PC-3 (cell line): ENCODE measurements at regions of chr7 and their contacts with region 1.

Region 1: GRCh38 chr7:74519395-74519794 is 65.7 kb downstream of the GTF2IRD1 start:
- DNase-seq: no peak
- ATAC-seq: no peak
- H3K4me3 ChIP-seq: no peak overlapping the region
- H3K27ac ChIP-seq: no peak overlapping the region
- H3K4me1 ChIP-seq: no peaks in the 10 kb centered on the region
- H3K27me3 ChIP-seq: no peaks in the 10 kb centered on the region
- CTCF ChIP-seq: no peak

Region 2: GRCh38 chr7:74371381-74372341 is 147.7 kb before region 1 on chr7:
- CTCF ChIA-PET with region 1: no interaction called
- POLR2A ChIA-PET with region 1: no interaction called
- intact Hi-C with region 1: no loop called
- DNase-seq: no peak
- ATAC-seq: peak; percentile 15
- H3K4me3 ChIP-seq: no peak overlapping the region
- H3K27ac ChIP-seq: no peak overlapping the region
- H3K4me1 ChIP-seq: no peaks in the 10 kb centered on the region
- H3K27me3 ChIP-seq: no peaks in the 10 kb centered on the region
- CTCF ChIP-seq: no peak

Region 3: DNA sequence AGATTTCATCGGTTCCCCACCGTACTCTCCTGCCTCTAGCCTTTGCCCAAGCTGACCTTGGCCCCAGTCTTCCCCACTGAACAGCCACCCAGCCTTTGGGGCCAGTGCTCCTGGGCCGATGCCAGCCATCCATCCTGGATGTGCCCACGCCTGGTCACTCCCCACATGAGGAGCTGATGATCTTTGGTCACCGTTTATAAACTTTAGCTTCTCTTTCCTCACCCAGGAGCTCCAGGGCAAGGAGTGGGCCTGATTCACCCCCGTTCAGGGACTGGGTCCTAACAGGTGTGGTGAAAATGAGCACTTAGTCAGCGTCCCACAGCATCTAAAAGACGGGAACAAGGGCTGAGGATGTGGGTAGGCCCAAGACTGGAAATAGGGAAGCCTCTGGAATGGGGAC is 42.8 kb before region 1 on chr7:
- CTCF ChIA-PET with region 1: interaction called, 10 read pairs
- POLR2A ChIA-PET with region 1: no interaction called
- intact Hi-C with region 1: no loop called
- DNase-seq: peak; percentile 50
- ATAC-seq: peak; percentile 7; the same call in 1 of the 2 replicates
- H3K4me3 ChIP-seq: no peak overlapping the region
- H3K27ac ChIP-seq: peak overlapping the region; percentile 71
- H3K4me1 ChIP-seq: peaks cover 47% of the 10 kb centered on the region
- H3K27me3 ChIP-seq: no peaks in the 10 kb centered on the region
- CTCF ChIP-seq: no peak

Region 4: GRCh38 chr7:74665296-74665938 is 146.0 kb after region 1 on chr7:
- CTCF ChIA-PET with region 1: no interaction called
- POLR2A ChIA-PET with region 1: no interaction called
- intact Hi-C with region 1: no loop called
- DNase-seq: no peak
- ATAC-seq: no peak
- H3K4me3 ChIP-seq: no peak overlapping the region
- H3K27ac ChIP-seq: no peak overlapping the region
- H3K4me1 ChIP-seq: peaks cover 24% of the 10 kb centered on the region
- H3K27me3 ChIP-seq: no peaks in the 10 kb centered on the region
- CTCF ChIP-seq: no peak